ENCODE measurements at regions of chr20 and their contacts with region 1.

Region 1: DNA sequence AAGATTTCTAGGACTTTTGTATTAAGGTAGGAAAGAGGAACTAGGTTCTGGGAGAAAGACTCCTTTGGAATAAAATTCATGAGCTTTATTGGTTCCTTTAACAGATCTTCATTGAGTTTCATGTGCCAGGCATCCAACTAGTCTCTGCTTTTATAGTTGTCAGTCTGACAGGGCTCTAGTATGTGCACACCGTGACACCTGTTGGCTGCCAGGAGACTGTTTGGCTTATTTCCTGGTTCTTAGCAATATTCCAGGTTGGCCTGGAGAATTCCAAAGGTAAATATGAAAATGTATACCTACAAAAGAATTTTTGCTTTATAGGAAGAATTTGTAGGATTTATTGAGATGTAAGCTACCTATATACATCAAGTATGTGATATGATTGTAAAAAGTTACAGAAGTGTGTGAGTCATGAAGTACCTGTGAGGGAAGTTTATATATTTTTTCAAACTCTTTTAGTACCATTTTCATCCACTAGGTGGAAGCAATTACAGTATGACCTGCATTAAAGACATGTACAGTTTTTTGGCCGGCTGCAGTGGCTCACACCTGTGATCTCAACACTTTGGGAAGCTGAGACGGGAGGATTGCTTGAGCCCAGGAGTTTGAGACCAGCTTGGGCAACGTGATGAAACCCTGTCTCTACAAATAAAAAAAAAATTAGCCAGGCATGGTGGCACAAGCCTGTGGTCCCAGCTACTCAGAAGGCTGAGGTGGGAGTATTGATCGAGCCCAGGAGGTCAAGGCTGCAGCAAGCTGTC is 35.2 kb downstream of the NDUFAF5 start:
- DNase-seq: peak in 1 of 10 donors; percentile 26

Region 2: GRCh38 chr20:13995081-13995694 is 175.1 kb after region 1 on chr20 and contains the start of gene MACROD2:
- intact Hi-C with region 1: loop called (anchors 10 kb)
- DNase-seq: peak; percentile 71 to 98 (median 83)

Region 3: DNA sequence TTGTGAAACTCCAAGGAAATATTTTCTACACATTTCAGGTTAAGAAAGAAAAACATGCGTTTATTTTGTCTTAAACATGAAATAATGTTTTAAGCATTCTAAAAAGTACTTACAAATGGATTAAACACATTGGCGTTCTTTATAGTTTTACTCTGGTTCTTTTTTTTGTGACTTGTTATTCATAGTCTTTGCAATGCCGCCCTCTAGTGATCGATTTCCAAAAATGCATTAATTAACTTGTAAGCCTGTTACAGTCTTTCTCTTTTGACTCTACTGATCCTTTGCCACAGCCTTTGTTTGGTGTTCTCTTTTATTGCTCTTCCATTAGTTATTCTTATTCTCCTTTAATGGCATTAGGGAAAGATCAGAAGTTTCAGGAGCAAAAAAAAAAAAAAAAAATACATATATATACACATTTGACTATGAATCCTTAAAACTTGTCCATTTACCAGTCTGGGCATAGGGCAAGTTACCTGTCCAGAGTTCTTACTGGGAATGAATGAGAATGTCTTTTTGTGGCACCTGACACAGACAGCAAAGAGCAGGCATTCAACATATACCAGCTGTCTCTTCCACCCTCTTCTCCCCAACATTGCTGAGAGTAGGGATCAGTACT is 235.2 kb after region 1 on chr20:
- intact Hi-C with region 1: loop called (anchors 1 kb)
- DNase-seq: no peak